ENCODE measurements at regions of chr13 and their contacts with region 1.

Region 1: GRCh38 chr13:105255472-105255871 is 1280.0 kb downstream of the EFNB2 start:
- DNase-seq: no peak
- ATAC-seq: no peak
- H3K4me3 ChIP-seq: no peak overlapping the region
- H3K27ac ChIP-seq: no peak overlapping the region
- H3K4me1 ChIP-seq: no peaks in the 10 kb centered on the region
- H3K27me3 ChIP-seq: no peaks in the 10 kb centered on the region
- CTCF ChIP-seq: no peak
- POLR2A ChIP-seq: no peak
- RAD21 ChIP-seq: no peak

Region 2: GRCh38 chr13:105219651-105220050 is 35.8 kb before region 1 on chr13:
- CTCF ChIA-PET with region 1: no interaction called
- POLR2A ChIA-PET with region 1: no interaction called
- RAD21 ChIA-PET with region 1: no interaction called
- intact Hi-C with region 1: loop called (anchors 1 kb)
- DNase-seq: no peak
- ATAC-seq: no peak
- H3K4me3 ChIP-seq: no peak overlapping the region
- H3K27ac ChIP-seq: no peak overlapping the region
- H3K4me1 ChIP-seq: no peaks in the 10 kb centered on the region
- H3K27me3 ChIP-seq: no peaks in the 10 kb centered on the region
- CTCF ChIP-seq: no peak
- POLR2A ChIP-seq: no peak
- RAD21 ChIP-seq: no peak

Region 3: DNA sequence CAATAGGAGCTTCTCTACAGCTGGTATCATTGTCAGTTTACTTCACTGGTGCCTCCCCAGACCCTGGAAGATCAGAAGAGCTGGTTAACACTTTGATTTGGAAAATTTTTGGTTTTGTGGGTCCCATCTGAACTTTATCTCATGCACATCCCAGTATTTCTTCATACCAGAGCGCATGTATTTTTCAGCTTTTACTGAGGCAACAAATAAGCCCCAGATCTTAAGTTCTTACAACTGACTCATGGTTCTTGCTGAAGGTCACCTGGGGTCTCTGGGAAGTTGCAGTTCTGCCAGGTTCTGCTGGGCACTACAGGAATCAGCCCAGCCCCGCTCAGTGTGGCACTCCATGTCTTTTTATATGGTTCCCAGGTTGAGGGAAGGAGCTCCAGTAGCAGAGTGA is 30.1 kb after region 1 on chr13:
- CTCF ChIA-PET with region 1: no interaction called
- POLR2A ChIA-PET with region 1: no interaction called
- RAD21 ChIA-PET with region 1: no interaction called
- intact Hi-C with region 1: loop called (anchors 2 kb)
- DNase-seq: no peak
- ATAC-seq: no peak
- H3K4me3 ChIP-seq: no peak overlapping the region
- H3K27ac ChIP-seq: no peak overlapping the region
- H3K4me1 ChIP-seq: no peaks in the 10 kb centered on the region
- H3K27me3 ChIP-seq: no peaks in the 10 kb centered on the region
- CTCF ChIP-seq: no peak
- POLR2A ChIP-seq: no peak
- RAD21 ChIP-seq: no peak